ENCODE measurements at regions of chr7 and their contacts with region 1.

Region 1: GRCh38 chr7:139620676-139621344 is 97.3 kb downstream of the CLEC2L start:
- DNase-seq: peak; percentile 64
- H3K4me3 Mint-ChIP-seq: no peak overlapping the region
- H3K27ac Mint-ChIP-seq: no peak overlapping the region
- H3K4me1 Mint-ChIP-seq: peaks cover 23% of the 10 kb centered on the region
- H3K27me3 Mint-ChIP-seq: no peaks in the 10 kb centered on the region

Region 2: GRCh38 chr7:139500770-139501138 is 120.1 kb before region 1 on chr7:
- CTCF ChIA-PET with region 1: interaction called, 25 read pairs
- POLR2A ChIA-PET with region 1: no interaction called
- DNase-seq: no peak
- H3K4me3 Mint-ChIP-seq: no peak overlapping the region
- H3K27ac Mint-ChIP-seq: no peak overlapping the region
- H3K4me1 Mint-ChIP-seq: peaks cover 12% of the 10 kb centered on the region
- H3K27me3 Mint-ChIP-seq: peaks cover 11% of the 10 kb centered on the region

Region 3: DNA sequence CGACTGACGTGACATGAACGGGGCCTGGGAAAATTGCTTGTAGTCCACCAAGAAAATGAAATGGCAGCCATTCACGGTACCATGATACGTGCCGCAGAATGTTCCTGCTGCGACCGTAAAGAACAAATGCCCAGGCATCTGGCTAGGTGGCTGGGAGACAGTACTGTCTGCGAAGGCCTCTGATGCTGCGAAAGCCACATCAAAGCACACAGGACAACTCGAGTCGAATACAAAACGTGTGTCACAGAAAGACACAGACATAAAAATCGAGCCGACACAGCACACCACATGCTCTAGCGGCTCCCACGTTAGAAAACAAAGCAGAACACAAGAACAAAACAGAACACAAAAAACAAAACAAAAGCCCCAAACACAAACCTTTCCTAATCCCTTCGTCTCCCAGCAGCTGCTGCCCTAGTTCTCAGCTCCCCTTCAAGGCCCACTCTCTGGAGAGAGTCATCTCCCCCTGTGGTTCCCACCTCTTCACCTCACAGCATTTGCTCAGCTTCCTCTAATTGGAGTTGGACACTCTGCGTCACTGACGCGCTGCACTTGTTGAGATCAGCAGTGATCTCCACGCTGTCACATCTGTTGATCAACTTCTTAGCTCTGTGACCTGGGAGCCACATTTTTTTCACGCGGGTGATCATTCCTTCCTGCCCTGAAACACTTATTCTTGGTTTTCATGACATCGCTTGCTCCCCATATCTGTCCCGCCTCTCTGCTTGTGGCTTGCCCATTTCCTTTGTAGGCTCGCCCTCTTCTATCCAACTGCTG is 14.9 kb after region 1 on chr7:
- CTCF ChIA-PET with region 1: interaction called, 15 read pairs
- POLR2A ChIA-PET with region 1: no interaction called
- DNase-seq: peak; percentile 57
- H3K4me3 Mint-ChIP-seq: peak overlapping the region; percentile 25
- H3K27ac Mint-ChIP-seq: peak overlapping the region; percentile 59
- H3K4me1 Mint-ChIP-seq: peaks cover 35% of the 10 kb centered on the region
- H3K27me3 Mint-ChIP-seq: no peaks in the 10 kb centered on the region

Region 4: DNA sequence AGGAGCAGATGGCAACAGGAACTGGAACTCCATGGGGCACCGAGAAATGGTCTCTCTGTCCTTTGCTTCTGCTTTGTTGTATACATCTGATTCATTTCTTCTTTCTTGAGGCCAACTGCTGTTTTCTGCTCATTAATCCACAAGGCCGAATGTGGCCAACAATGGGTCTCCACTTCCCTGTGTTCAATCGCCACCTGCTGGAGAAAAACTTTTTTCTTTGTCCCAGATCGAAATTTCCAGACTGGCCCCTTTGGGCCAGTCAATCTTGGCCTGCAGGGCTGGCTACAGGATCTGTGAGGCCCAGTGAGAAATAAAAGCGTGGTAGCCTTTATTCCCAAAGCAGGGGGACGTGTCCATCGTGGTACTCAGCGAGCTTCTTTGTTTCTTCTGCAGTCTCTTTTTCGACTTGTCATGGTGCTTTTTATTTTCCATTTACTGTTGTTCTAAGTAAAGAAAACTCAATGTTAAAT is 383.1 kb after region 1 on chr7:
- CTCF ChIA-PET with region 1: interaction called, 76 read pairs
- POLR2A ChIA-PET with region 1: no interaction called
- DNase-seq: peak; percentile 39
- H3K4me3 Mint-ChIP-seq: no peak overlapping the region
- H3K27ac Mint-ChIP-seq: no peak overlapping the region
- H3K4me1 Mint-ChIP-seq: no peaks in the 10 kb centered on the region
- H3K27me3 Mint-ChIP-seq: no peaks in the 10 kb centered on the region

Measured in activated CD4-positive, alpha-beta memory T cell treated with anti-CD3 and anti-CD28 coated beads, Interleukin-2, amount 10 ng/mL, durations not matched to agents 7 days and 5 days (primary cell).